Dendritic cell treated with granulocyte-macrophage colony-stimulating factor and Interleukin-4, amounts not matched to agents 40 ng/mL and 50 ng/mL, for 4 days (primary cell): ENCODE measurements at regions of chr3 and their contacts with region 1.

Region 1: GRCh38 chr3:148863814-148864213 is 1.3 kb upstream of the CPA3 start:
- H3K4me3 Mint-ChIP-seq: no peak overlapping the region
- H3K27ac Mint-ChIP-seq: no peak overlapping the region
- H3K4me1 Mint-ChIP-seq: no peaks in the 10 kb centered on the region
- H3K27me3 Mint-ChIP-seq: no peaks in the 10 kb centered on the region

Region 2: DNA sequence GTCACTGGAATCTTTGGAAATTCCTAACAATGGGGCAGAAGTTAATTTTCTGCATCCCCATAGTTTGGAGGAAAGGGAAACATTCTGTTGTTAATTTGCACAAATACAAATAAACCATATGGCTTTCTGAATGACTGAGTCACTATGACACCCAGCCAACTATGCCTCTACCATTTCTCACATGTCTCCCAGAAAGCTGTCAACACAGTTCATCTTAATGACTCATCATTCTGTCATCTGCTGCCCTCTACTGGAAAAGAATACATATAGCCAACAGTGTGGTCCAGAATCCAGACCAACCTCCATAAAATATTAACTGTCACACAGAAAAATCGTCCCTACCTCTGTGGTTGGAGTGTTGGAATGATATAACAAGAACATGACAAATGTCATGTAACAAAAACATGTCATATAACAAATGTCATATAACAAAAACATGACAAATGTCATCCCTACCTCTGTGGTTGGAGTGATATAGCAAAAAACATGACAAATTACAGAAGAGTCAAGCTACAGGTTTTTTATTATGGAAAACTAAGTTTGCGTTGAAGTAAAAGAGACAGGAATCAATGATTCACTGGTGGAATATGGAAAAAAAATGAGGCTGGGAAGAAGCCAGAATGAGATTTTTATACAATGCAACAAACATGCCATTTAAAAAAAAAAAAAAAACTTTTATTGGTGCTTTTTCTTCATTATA is 79.8 kb after region 1 on chr3:
- intact Hi-C with region 1: loop called (anchors 2 kb)
- H3K4me3 Mint-ChIP-seq: no peak overlapping the region
- H3K27ac Mint-ChIP-seq: no peak overlapping the region
- H3K4me1 Mint-ChIP-seq: no peaks in the 10 kb centered on the region
- H3K27me3 Mint-ChIP-seq: no peaks in the 10 kb centered on the region

Region 3: DNA sequence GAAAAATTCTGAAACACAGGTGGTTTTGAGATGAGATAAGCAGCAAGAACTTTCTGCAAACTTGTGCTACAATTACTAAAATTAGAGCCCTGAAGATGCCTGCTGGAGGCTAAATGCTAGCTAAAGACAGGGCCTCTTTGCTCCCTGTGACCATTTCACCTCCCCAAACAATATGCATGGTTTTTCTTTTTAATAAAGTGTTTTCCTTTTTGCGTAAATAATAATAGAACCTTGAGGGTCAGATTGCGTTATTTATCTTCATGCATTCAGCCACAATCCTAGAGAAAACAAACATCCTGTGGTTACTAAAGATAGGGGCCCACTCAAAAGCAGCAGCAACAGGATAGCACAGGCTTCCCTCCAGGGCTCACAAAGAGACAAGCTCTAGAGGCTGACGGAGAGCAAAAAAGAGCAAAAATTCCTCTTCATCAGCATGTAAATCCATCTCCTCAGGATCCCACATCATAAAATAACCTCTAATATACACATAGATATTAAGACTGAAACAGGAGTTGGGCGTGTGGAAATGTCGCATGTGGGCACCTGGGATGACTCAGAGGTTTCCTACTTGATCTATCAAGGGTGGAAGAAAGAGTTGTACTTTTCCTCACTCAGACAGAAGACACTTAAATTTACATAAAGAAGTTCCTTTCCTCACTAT is 384.3 kb after region 1 on chr3:
- intact Hi-C with region 1: no loop called
- H3K4me3 Mint-ChIP-seq: no peak overlapping the region
- H3K27ac Mint-ChIP-seq: no peak overlapping the region
- H3K4me1 Mint-ChIP-seq: peaks cover 31% of the 10 kb centered on the region
- H3K27me3 Mint-ChIP-seq: peaks cover 1% of the 10 kb centered on the region